Transverse colon (tissue), 4 donors: ENCODE measurements at regions of chr9 and their contacts with region 1.

Region 1: GRCh38 chr9:69056191-69056815 is 20.8 kb downstream of the FXN start:
- DNase-seq: no peak
- H3K4me3 ChIP-seq: no peak overlapping the region
- H3K27ac ChIP-seq: no peak overlapping the region
- H3K4me1 ChIP-seq: peaks cover 0 to 5% (median 0%) of the 10 kb centered on the region in 4 donors
- H3K27me3 ChIP-seq: no peaks in the 10 kb centered on the region
- CTCF ChIP-seq: no peak
- EP300 ChIP-seq: no peak
- POLR2A ChIP-seq: no peak

Region 2: DNA sequence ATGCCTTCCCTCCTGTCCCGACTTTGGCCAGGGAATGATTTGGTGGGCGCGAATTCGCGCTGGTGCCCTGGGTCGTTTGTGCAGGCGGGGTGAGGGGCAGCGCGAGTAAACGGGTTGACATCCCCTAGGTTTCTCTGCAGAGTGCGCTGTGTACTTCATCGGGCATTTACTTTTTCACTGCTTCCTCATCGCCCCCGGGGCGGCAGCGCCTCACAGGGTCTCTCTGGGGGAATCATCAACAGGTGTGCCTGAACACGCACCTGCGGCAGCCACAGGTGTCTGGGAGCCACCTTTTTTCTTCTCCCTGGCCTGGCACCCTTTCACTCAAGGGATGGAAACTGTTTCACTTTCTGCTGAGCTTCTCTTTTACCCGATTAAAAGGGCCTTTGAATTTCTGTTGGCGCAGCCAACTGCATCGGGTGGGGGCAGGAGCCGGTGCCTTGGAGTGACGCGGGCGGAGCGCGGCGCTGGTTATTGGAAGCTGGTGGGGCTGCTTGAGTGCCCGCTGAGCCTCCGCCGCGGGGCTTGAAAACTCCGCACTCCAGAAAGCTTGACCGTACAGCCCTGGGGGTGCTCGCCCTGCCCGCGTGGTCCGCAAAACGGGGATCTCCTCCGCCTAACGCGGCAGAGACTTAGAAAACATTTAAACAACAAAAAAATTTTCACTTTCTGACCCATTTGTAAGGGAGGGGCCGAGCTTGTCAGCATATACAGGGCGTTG is 65.7 kb after region 1 on chr9:
- in situ Hi-C with region 1: no loop called
- intact Hi-C with region 1: no loop called
- DNase-seq: peak; percentile 68
- H3K4me3 ChIP-seq: peak overlapping the region; percentile 44 to 89 (median 79)
- H3K27ac ChIP-seq: peak overlapping the region; percentile 86 to 94 (median 93)
- H3K4me1 ChIP-seq: peaks cover 0 to 19% (median 8%) of the 10 kb centered on the region in 4 donors
- H3K27me3 ChIP-seq: no peaks in the 10 kb centered on the region
- CTCF ChIP-seq: no peak
- EP300 ChIP-seq: no peak
- POLR2A ChIP-seq: no peak

Region 3: DNA sequence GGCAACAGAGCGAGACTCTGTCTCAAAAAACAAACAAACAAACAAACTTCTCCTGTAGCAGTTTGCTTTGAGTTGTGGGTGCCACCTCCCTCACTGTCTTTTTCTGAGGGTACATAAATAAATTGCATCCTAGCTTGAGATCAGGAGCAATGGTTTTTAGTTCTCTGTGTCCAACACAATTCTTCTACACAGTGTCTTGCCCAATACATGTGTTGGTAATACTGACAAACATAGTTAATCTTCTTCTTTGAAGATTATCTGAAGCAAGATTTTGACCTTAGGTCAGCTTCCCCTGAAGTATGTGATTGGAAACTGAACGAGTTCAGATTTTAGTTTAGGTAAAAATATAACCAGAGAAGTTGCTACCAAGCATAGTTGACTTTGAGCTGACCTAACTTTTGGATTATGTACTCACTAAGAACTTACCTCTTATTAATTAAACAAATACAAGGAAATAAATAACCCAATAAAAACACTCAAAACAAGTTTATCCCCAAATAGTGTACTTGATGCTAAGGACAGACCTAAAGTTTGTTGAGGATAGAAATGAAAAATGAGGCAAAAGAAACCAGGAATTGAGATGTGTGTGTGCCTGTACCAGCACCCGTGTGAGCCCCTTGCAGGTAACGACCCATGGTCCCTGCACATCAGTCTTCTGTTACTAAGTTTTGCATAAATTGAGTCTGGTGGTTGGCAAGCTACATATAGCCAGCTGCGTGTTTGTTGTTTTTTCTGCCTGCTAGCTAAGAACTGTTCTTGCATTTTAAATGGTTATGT is 134.0 kb after region 1 on chr9:
- in situ Hi-C with region 1: loop called (anchors 10 to 25 kb)
- intact Hi-C with region 1: loop called (anchors 5 kb)
- DNase-seq: no peak
- H3K4me3 ChIP-seq: no peak overlapping the region
- H3K27ac ChIP-seq: no peak overlapping the region
- H3K4me1 ChIP-seq: peaks cover 0 to 13% (median 11%) of the 10 kb centered on the region in 4 donors
- H3K27me3 ChIP-seq: no peaks in the 10 kb centered on the region
- CTCF ChIP-seq: no peak
- EP300 ChIP-seq: no peak
- POLR2A ChIP-seq: no peak

Region 4: GRCh38 chr9:69199769-69200470 is 143.6 kb after region 1 on chr9:
- in situ Hi-C with region 1: loop called (anchors 10 to 25 kb)
- intact Hi-C with region 1: no loop called
- DNase-seq: no peak
- H3K4me3 ChIP-seq: no peak overlapping the region
- H3K27ac ChIP-seq: no peak overlapping the region
- H3K4me1 ChIP-seq: peaks cover 0 to 18% (median 6%) of the 10 kb centered on the region in 4 donors
- H3K27me3 ChIP-seq: no peaks in the 10 kb centered on the region
- CTCF ChIP-seq: no peak
- EP300 ChIP-seq: no peak
- POLR2A ChIP-seq: no peak